Mammary epithelial cell (primary cell): ENCODE measurements at regions of chr16 and their contacts with region 1.

Region 1: GRCh38 chr16:56450986-56451752 is at the starts of genes NUDT21 and OGFOD1:
- DNase-seq: peak; percentile 98
- H3K4me3 ChIP-seq: peak within 1 kb of the TSS; percentile 84 to 98 (median 88)
- H3K27ac ChIP-seq: peak within 1 kb of the TSS; percentile 67
- H3K4me1 ChIP-seq: peaks cover 13% of the 10 kb centered on the region
- H3K27me3 ChIP-seq: no peaks in the 10 kb centered on the region
- CTCF ChIP-seq: no peak
- total RNA-seq, gene NUDT21: 57.7 to 109 TPM
- total RNA-seq, gene OGFOD1: 84.3 to 110 TPM

Region 2: GRCh38 chr16:56324406-56324805 is 126.8 kb before region 1 on chr16:
- CTCF ChIA-PET with region 1: no interaction called
- dilution Hi-C with region 1: no loop called
- in situ Hi-C with region 1: no loop called
- intact Hi-C with region 1: loop called (anchors 1 kb)
- DNase-seq: peak; percentile 93
- H3K4me3 ChIP-seq: no peak overlapping the region
- H3K27ac ChIP-seq: no peak overlapping the region
- H3K4me1 ChIP-seq: peaks cover 18% of the 10 kb centered on the region
- H3K27me3 ChIP-seq: no peaks in the 10 kb centered on the region
- CTCF ChIP-seq: no peak

Region 3: DNA sequence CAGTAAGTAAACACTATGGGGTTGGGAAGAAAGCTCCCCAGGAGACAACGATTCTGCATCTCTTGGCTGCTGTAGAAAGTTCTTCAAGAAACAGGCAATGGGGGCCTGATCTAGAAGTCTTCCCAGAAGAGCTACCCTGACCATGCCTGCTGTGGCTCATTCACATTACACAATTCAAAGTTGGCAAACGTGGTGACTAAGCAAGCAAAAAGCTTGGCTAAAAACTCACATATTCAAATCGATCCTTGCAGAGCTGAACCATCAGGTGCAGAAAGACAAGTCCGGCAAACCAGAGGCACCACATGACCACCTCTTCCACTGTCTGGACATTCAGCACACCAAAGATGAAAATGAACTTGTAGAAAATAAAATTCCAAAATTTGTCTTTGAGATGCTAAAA is 42.0 kb before region 1 on chr16:
- CTCF ChIA-PET with region 1: no interaction called
- dilution Hi-C with region 1: no loop called
- in situ Hi-C with region 1: no loop called
- intact Hi-C with region 1: no loop called
- DNase-seq: peak; percentile 62
- H3K4me3 ChIP-seq: no peak overlapping the region
- H3K27ac ChIP-seq: no peak overlapping the region
- H3K4me1 ChIP-seq: peaks cover 5% of the 10 kb centered on the region
- H3K27me3 ChIP-seq: no peaks in the 10 kb centered on the region
- CTCF ChIP-seq: no peak

Region 4: GRCh38 chr16:56425439-56425832 is 25.7 kb before region 1 on chr16 and contains the start of gene AMFR:
- CTCF ChIA-PET with region 1: no interaction called
- dilution Hi-C with region 1: no loop called
- in situ Hi-C with region 1: no loop called
- intact Hi-C with region 1: loop called (anchors 2 kb)
- DNase-seq: peak; percentile 72
- H3K4me3 ChIP-seq: peak within 1 kb of the TSS; percentile 56 to 80 (median 77)
- H3K27ac ChIP-seq: peak within 1 kb of the TSS; percentile 74
- H3K4me1 ChIP-seq: peaks cover 16% of the 10 kb centered on the region
- H3K27me3 ChIP-seq: no peaks in the 10 kb centered on the region
- CTCF ChIP-seq: peak in 1 of 2 donors; percentile 28
- total RNA-seq, gene AMFR: 77.7 to 238 TPM

Region 5: DNA sequence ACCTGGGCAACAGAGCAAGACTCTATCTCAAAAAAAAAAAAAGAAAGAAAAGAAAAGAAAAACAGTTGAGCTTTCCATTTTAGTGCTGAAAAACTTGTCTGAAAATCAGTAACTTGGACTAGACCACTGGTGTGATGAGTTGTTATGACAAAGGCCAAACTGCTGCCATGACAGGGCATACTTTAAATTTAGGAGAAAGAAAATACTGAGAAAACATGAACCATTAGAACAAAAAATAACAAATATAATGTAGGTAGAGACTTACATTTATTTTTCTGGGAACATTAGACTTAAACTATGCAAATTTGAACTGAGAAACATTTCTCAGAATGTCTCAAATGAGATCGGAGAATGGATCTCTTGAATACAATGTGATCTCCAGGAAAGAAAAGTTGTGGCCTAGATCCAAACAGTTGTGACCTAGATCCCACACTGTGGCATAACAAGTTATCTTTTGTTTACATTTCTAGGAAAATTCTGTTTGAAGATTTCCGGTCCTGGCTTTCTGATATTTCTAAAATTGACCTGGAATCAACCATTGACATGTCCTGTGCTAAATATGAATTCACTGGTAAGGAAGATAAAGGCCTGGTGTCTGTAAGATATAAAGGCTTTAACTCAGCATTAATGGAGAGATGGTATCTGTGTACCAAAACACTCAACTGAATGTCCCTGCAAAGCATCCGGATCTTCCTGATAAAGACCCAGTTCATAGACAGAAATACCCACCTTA is 11.1 kb after region 1 on chr16:
- CTCF ChIA-PET with region 1: no interaction called
- dilution Hi-C with region 1: no loop called
- in situ Hi-C with region 1: no loop called
- intact Hi-C with region 1: no loop called
- DNase-seq: no peak
- H3K4me3 ChIP-seq: no peak overlapping the region
- H3K27ac ChIP-seq: no peak overlapping the region
- H3K4me1 ChIP-seq: no peaks in the 10 kb centered on the region
- H3K27me3 ChIP-seq: no peaks in the 10 kb centered on the region
- CTCF ChIP-seq: no peak